GM12878 (cell line): ENCODE measurements at regions of chr13 and their contacts with region 1.

Region 1: DNA sequence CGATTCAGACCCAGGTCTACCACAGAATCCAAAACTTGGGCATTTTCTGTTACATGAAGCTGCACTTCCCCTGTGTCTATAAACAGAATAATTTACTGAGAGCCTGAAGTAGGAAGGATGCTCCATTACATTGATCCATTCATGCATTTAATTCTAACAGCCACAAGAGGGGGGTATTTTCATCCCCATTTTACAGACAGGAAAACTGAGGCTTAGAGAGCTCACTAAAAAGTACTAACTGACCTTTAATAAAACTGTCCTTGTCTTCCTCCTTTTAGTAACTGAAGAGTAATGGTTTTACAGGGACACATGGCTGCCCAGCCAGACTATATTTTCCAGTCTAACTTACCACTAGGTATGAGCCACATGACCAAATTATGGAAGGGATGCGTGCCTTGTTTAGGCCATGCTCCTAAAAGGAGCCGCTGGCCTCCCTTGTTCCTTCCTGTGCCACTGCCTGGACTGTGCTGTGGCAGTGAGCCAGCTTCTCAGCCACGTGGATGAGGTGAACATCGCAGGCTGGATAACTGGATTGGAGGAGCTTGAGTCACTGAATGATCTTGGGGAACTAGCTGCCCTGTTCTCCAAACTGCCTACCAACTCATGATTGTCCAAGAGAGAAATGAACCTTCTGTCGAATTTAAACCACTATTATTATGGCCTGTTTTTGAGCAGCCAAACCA is 108.3 kb downstream of the DOCK9 start:
- DNase-seq: no peak
- ATAC-seq: peak; percentile 63; the same call in 2 of the 3 replicates
- H3K4me3 ChIP-seq: no peak overlapping the region
- H3K27ac ChIP-seq: no peak overlapping the region
- H3K4me1 ChIP-seq: no peaks in the 10 kb centered on the region
- H3K27me3 ChIP-seq: no peaks in the 10 kb centered on the region
- CTCF ChIP-seq: peak in 2 of 3 experiments; percentile 28 to 34; a peak in 4 of 6 replicates
- EP300 ChIP-seq: no peak
- POLR2A ChIP-seq: no peak
- RAD21 ChIP-seq: peak; percentile 26; the same call in 1 of the 2 replicates

Region 2: DNA sequence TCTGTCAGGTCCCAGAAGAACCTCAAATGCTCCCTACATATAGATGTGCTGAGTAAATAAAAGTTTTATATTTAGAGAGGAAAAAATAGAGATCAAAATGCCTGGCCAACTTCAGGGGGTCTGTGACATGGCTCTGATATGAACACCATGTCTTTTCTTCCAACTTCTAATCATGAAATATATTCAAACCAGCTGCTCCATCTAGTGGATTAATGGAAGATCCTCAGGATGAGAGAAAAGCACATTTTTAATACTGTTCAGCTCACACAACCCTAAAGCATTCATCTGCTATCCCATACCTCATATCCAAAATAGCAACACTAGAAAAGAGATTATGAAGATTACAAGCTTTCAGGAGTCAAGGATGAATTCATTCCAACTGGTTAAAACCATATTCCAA is 164.3 kb after region 1 on chr13:
- CTCF ChIA-PET with region 1: interaction called, 6 read pairs
- POLR2A ChIA-PET with region 1: no interaction called
- RAD21 ChIA-PET with region 1: no interaction called
- SMC1A ChIA-PET with region 1: interaction called, 7 read pairs
- in situ Hi-C with region 1: no loop called
- intact Hi-C with region 1: loop called (anchors 5 kb)
- DNase-seq: no peak
- ATAC-seq: peak; percentile 44; the same call in 2 of the 3 replicates
- H3K4me3 ChIP-seq: no peak overlapping the region
- H3K27ac ChIP-seq: no peak overlapping the region
- H3K4me1 ChIP-seq: no peaks in the 10 kb centered on the region
- H3K27me3 ChIP-seq: no peaks in the 10 kb centered on the region
- CTCF ChIP-seq: peak; percentile 35 to 38 (median 37); a peak in 4 of 6 replicates
- EP300 ChIP-seq: no peak
- POLR2A ChIP-seq: no peak
- RAD21 ChIP-seq: peak; percentile 58